Gastrocnemius medialis (tissue), 4 donors: ENCODE measurements at regions of chr17 and their contacts with region 1.

Region 1: DNA sequence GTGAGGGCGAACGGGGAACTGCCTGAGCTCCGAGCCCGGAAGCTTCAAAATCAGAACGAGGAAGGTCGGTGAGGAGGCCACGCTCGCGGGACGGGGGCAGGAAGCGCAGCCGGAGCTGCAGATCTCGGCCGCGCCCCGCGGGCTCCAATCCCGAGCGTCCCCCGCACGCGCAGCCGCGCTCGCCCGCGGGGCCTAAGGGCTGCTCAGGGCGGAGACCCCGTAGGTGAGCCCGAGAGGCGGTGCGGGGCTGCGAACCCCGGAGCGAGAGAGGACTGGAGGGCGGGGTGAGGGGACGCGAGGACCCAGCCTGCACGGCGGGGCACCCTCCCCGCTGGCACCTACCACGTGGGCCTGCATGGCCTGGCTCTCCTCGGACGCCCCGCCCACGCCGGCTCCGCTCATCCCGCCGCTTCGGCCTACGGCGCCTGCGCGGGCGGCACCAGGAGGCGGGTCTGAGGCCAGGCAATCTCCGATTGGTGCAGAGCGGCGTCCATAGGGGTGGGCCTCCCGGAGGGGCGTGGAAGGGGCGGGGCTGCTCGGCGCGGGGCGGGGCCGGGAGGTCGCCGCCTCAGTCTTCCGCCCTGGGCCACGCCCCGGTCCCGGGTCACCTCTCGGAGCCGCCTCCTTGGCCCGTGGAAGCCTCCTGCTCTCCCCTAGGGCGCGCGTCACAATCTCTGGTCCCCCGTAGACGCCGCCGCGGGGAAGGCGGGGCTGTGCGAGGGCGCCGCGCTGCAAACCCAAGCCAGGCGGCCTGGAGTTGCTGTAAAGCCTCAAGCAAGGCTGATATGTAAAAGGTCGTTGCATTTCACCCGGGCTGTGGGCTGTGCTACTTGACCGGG is 27.8 kb upstream of the METRNL start:
- DNase-seq: peak; percentile 93 to 97
- ATAC-seq: peak; percentile 90
- H3K4me3 ChIP-seq: peak overlapping the region; percentile 64 to 81 (median 76)
- H3K27ac ChIP-seq: peak overlapping the region; percentile 89 to 91 (median 89)
- H3K4me1 ChIP-seq: peaks cover 17 to 21% of the 10 kb centered on the region in 2 donors
- H3K27me3 ChIP-seq: no peaks in the 10 kb centered on the region
- CTCF ChIP-seq: no peak
- POLR2A ChIP-seq: peak; percentile 84 to 88

Region 2: DNA sequence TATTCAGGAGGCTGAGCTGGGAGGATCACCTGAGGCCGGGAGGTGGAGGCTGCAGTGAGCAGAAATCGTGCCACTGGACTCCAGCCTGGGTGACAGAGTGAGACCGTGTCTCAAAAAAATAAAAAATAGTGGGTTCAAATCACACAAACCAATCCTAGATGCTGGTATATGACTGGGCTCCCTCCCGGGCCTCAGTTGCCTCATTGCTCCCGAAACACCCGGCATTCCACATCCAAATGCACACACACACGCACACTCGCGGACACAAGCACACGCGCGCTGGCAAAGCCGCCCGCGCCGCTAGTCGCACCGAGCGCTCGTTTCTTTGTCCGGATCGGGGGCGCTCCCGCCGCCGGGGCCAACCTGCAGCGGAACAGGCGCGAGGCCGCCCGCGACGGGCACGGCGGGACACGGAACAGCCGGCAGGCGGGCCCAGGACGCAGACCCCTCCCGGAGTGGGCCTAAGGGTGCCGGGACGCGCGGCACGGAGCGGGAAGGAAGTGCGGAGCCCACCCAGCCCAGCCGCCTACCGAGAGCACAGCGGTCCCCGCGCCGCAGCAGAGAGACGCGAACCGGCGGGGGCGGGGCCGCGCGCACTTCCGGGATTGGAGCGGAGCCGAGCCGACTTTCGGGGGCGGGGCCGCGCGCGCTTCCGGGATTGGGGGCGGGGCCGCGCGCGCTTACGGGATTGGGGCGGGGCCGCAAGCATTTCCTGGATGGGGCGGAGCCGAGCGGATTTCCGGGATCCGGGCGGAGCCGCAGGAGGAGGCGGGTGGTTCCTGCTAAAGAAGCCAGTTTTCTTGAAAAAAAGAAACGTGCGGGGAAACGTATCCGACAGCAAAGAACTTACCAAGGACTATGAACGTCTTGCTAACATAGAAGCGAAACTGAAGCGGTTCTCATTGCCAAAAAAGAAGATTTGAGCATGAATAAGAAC is 601.2 kb before region 1 on chr17 and contains the start of gene CYBC1:
- in situ Hi-C with region 1: no loop called
- intact Hi-C with region 1: loop called (anchors 2 kb)
- DNase-seq: peak; percentile 83 to 88
- ATAC-seq: peak; percentile 94 to 95
- H3K4me3 ChIP-seq: peak within 1 kb of the TSS; percentile 67 to 100 (median 87)
- H3K27ac ChIP-seq: peak within 1 kb of the TSS; percentile 84 to 91 (median 89)
- H3K4me1 ChIP-seq: peaks cover 10 to 25% of the 10 kb centered on the region in 2 donors
- H3K27me3 ChIP-seq: no peaks in the 10 kb centered on the region
- CTCF ChIP-seq: no peak
- POLR2A ChIP-seq: peak; percentile 92 to 98
- total RNA-seq, gene CYBC1: 17.3 to 29.8 (median 19.3) TPM

Region 3: DNA sequence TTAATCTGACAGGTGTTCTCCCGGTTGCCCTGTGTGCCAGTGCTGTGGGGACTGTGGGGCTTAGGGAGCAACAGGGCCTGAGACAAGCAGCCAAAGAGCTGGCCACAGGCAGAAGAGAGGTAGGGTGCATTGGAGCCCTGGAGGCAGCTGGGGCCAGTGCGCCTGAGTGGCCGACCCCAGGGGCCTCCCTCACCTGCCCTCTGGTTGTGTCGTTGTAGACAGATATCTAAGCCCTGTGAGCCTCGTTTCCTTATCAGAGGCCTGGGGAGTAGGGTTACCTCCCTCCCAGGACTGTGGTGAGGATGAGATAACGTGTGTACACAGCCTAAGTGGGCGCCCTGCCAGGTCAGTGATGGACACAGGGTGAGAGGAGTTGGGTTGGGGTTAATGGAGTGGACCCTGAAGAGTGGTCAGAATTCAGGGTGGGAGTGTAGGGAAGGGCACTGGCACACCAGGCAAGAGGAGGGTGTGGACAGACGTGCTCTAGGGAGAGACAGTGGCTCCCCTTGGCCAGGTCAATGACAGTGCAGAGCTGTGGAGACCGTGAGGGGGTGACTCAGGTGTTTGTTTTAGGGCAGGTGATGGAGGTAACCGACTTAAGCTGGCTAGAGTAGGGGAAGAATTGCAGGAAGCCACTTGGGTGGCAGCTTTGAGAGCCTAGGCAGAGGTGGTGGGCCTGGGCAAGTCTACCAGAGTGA is 589.6 kb before region 1 on chr17:
- in situ Hi-C with region 1: no loop called
- intact Hi-C with region 1: no loop called
- DNase-seq: no peak
- ATAC-seq: no peak
- H3K4me3 ChIP-seq: no peak overlapping the region
- H3K27ac ChIP-seq: no peak overlapping the region
- H3K4me1 ChIP-seq: peaks cover 15 to 17% of the 10 kb centered on the region in 2 donors
- H3K27me3 ChIP-seq: no peaks in the 10 kb centered on the region
- CTCF ChIP-seq: no peak
- POLR2A ChIP-seq: no peak

Region 4: GRCh38 chr17:82583720-82584234 is 467.8 kb before region 1 on chr17:
- in situ Hi-C with region 1: no loop called
- intact Hi-C with region 1: no loop called
- DNase-seq: no peak
- ATAC-seq: no peak
- H3K4me3 ChIP-seq: no peak overlapping the region
- H3K27ac ChIP-seq: peak overlapping the region in 1 of 4 donors; percentile 56
- H3K4me1 ChIP-seq: no peaks in the 10 kb centered on the region
- H3K27me3 ChIP-seq: no peaks in the 10 kb centered on the region
- CTCF ChIP-seq: no peak
- POLR2A ChIP-seq: no peak

Region 5: GRCh38 chr17:82781894-82782274 is 269.7 kb before region 1 on chr17:
- in situ Hi-C with region 1: no loop called
- intact Hi-C with region 1: loop called (anchors 10 kb)
- DNase-seq: peak; percentile 61 to 86
- ATAC-seq: peak; percentile 94 to 97
- H3K4me3 ChIP-seq: peak overlapping the region in 2 of 4 donors; percentile 7 to 20
- H3K27ac ChIP-seq: peak overlapping the region; percentile 81 to 87 (median 84)
- H3K4me1 ChIP-seq: peaks cover 16 to 19% of the 10 kb centered on the region in 2 donors
- H3K27me3 ChIP-seq: no peaks in the 10 kb centered on the region
- CTCF ChIP-seq: peak; percentile 94 to 99 (median 98)
- POLR2A ChIP-seq: peak in 1 of 2 donors; percentile 41

Region 6: GRCh38 chr17:83012868-83013778 is 38.5 kb before region 1 on chr17:
- in situ Hi-C with region 1: no loop called
- intact Hi-C with region 1: no loop called
- DNase-seq: no peak
- ATAC-seq: no peak
- H3K4me3 ChIP-seq: no peak overlapping the region
- H3K27ac ChIP-seq: no peak overlapping the region
- H3K4me1 ChIP-seq: no peaks in the 10 kb centered on the region
- H3K27me3 ChIP-seq: no peaks in the 10 kb centered on the region
- CTCF ChIP-seq: no peak
- POLR2A ChIP-seq: no peak

Region 7: DNA sequence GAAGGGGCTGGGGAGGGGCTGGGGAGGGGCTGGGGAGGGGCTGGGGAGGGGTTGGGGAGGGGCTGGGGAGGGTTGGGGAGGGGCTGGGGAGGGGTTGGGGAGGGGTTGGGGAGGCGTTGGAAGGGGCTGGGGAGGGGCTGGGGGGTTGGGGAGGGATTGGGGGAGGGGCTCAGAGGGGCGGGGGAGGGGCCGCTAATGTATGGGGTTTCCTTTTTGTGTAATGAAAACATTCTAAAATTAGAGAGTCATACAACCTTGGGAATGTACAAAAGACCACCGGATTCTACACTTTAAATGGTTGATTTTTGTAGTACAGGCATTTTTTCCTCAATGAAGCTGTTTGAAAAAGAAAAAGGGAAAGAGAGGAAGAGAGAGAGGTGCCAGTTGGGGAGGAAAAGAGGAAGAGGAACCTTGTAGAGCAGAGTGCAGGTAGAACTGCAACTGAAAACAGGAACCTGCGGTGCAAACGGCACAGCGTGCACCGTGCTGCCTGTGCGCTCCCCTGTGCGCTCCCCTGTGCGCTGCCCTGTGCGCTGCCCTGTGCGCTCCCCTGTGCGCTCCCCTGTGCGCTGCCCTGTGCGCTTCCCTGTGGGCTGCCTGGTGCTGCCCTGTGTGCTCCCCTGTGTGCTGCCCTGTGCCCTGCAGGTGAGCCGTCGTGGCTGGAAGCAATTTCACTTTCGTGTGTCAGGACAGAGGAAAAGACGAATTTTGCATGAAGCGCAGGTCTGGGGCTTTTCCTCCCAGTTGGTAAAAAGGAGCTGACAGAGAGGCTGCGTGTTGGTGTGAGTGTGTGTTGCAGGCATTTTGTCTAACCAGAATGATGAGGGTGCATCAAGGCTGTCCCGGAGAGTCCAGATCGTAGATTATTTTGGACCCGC is 68.6 kb after region 1 on chr17:
- in situ Hi-C with region 1: no loop called
- intact Hi-C with region 1: no loop called
- DNase-seq: no peak
- ATAC-seq: no peak
- H3K4me3 ChIP-seq: no peak overlapping the region
- H3K27ac ChIP-seq: no peak overlapping the region
- H3K4me1 ChIP-seq: no peaks in the 10 kb centered on the region
- H3K27me3 ChIP-seq: peaks cover 11 to 37% (median 25%) of the 10 kb centered on the region in 3 donors
- CTCF ChIP-seq: no peak
- POLR2A ChIP-seq: no peak